ENCODE measurements at regions of chr5 and their contacts with region 1.

Region 1: GRCh38 chr5:96870094-96871026 is 5.9 kb upstream of the ERAP2 start:
- DNase-seq: no peak
- ATAC-seq: no peak
- H3K4me3 ChIP-seq: no peak overlapping the region
- H3K27ac ChIP-seq: no peak overlapping the region
- H3K4me1 ChIP-seq: no peaks in the 10 kb centered on the region
- H3K27me3 ChIP-seq: no peaks in the 10 kb centered on the region
- CTCF ChIP-seq: no peak
- POLR2A ChIP-seq: no peak

Region 2: GRCh38 chr5:96565582-96566265 is 304.6 kb before region 1 on chr5:
- intact Hi-C with region 1: no loop called
- DNase-seq: no peak
- ATAC-seq: no peak
- H3K4me3 ChIP-seq: no peak overlapping the region
- H3K27ac ChIP-seq: no peak overlapping the region
- H3K4me1 ChIP-seq: peaks cover 9% of the 10 kb centered on the region
- H3K27me3 ChIP-seq: no peaks in the 10 kb centered on the region
- CTCF ChIP-seq: no peak
- POLR2A ChIP-seq: no peak

Region 3: GRCh38 chr5:97162045-97162444 is 291.7 kb after region 1 on chr5:
- intact Hi-C with region 1: loop called (anchors 5 kb)
- DNase-seq: peak; percentile 55 to 66 (median 64)
- ATAC-seq: peak; percentile 58
- H3K4me3 ChIP-seq: no peak overlapping the region
- H3K27ac ChIP-seq: no peak overlapping the region
- H3K4me1 ChIP-seq: peaks cover 7% of the 10 kb centered on the region
- H3K27me3 ChIP-seq: no peaks in the 10 kb centered on the region
- CTCF ChIP-seq: peak; percentile 72 to 90 (median 81)
- POLR2A ChIP-seq: no peak

Measured in body of pancreas (tissue), 4 donors.